ENCODE measurements at regions of chr7 and their contacts with region 1.

Region 1: DNA sequence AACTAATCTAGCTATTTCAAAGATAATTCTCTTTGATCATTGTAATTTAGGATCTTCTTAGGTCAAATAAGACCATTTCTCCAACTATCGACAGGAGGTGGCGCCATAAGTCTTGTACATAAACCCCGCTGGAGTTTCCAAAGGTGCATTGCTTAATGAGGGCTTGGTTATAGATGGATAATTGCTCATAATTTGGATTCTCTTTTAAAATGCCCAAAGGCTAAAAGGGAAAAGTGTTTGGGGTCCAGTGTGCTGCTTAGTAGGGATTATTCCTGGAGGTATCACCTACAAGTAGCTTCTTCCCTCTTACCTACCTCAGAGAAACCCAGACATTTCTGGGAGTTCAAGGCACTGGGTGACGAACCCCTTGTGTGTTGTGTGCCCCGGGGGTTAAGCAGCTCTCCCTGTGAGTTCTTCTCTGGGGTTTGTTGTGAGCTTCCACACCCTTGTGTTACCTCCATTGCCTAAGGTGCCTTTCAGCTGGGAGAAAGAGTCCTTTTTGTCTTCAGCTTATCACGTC is 75.2 kb downstream of the PAXIP1 start:
- DNase-seq: peak; percentile 85
- H3K4me3 ChIP-seq: peak overlapping the region; percentile 63
- H3K27ac ChIP-seq: no peak overlapping the region
- H3K4me1 ChIP-seq: no peaks in the 10 kb centered on the region
- H3K27me3 ChIP-seq: peaks cover 31% of the 10 kb centered on the region
- CTCF ChIP-seq: peak; percentile 77

Region 2: GRCh38 chr7:155009570-155010157 is 82.0 kb after region 1 on chr7:
- CTCF ChIA-PET with region 1: interaction called, 3 read pairs
- POLR2A ChIA-PET with region 1: no interaction called
- intact Hi-C with region 1: loop called (anchors 5 kb)
- DNase-seq: peak; percentile 25
- H3K4me3 ChIP-seq: no peak overlapping the region
- H3K27ac ChIP-seq: no peak overlapping the region
- H3K4me1 ChIP-seq: no peaks in the 10 kb centered on the region
- H3K27me3 ChIP-seq: no peaks in the 10 kb centered on the region
- CTCF ChIP-seq: peak; percentile 59

Region 3: DNA sequence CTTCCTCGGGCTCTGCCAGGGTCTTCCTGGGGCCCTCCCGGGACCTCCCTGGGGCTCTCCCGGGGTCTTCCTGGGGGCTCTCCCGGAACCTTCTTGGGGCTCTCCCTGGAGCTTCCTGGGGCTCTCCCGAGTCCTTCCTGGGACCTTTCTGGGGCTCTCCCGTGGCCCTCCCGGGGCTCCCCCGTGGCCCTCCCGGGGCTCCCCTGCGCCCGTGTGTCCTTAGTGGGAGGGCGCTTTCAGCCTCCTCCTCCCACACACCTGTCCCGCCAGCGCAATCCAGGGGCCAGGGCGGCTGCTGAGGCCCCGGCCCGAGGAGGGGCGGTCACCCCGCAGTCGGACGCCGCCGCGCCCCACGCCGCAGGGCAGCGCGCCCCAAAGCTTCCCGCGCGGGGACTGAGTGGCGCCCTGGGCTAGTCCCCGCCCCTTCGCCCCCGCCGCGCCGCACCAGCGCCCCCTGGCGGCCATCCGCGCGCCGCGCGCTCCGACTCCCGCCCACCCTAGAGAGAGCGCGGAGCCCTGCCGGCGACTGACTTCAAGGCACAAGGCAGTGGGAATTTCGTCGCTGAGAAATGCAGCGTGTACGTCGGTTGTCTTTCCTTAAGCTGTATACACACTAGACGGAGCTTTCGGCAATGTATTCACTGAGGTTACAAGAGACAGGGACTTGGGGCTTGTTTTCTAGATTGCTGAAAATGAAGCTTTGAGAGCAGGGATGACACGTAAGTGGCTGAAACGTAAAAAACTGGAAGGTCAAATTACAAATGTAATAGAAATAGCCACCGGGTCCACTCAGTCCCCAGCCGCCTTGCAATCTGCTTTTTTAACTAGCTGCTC is 417.1 kb after region 1 on chr7:
- CTCF ChIA-PET with region 1: interaction called, 9 read pairs
- POLR2A ChIA-PET with region 1: no interaction called
- intact Hi-C with region 1: loop called (anchors 1 kb)
- DNase-seq: peak; percentile 84
- H3K4me3 ChIP-seq: peak overlapping the region; percentile 45
- H3K27ac ChIP-seq: peak overlapping the region; percentile 44
- H3K4me1 ChIP-seq: peaks cover 5% of the 10 kb centered on the region
- H3K27me3 ChIP-seq: no peaks in the 10 kb centered on the region
- CTCF ChIP-seq: peak; percentile 73

Region 4: DNA sequence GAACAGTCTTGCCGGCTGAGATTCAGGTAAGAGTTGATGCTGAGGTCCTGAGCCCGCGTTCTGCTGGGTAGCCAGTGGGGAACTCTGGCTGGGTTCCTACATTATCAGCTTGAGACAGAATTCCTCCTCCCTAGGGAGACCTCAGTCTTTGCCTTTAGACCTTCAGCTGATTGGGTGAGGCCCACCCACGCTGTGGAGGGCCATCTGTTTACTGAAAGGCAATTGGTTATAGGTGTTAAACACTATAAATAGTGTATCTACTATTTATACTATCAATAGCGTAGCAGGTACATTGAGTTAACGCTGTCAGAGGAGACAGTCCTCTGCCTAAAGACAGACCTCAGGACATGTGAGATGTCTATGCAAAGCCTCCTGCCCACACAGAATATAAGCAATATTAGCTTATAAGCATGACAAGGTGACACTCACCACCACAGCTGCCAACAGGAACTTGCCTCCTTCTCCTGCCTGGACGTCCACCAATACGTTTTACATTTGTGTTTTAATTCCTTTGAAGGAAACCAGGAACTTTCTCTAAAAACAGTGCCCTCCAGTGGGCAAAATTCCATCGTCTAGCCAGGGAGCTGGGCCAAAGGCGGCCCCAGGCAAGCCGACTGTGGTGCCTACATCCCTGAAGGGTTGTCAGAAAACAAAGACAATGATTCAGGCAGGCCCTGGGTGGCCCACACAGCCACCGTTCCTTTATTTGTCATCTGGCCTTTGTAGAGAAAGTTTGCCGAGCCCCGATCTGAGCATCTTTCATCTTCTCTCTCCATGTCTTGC is 428.8 kb after region 1 on chr7:
- CTCF ChIA-PET with region 1: interaction called, 11 read pairs
- POLR2A ChIA-PET with region 1: no interaction called
- intact Hi-C with region 1: loop called (anchors 5 kb)
- DNase-seq: peak; percentile 61
- H3K4me3 ChIP-seq: no peak overlapping the region
- H3K27ac ChIP-seq: no peak overlapping the region
- H3K4me1 ChIP-seq: no peaks in the 10 kb centered on the region
- H3K27me3 ChIP-seq: peaks cover 51% of the 10 kb centered on the region
- CTCF ChIP-seq: peak; percentile 71

Region 5: DNA sequence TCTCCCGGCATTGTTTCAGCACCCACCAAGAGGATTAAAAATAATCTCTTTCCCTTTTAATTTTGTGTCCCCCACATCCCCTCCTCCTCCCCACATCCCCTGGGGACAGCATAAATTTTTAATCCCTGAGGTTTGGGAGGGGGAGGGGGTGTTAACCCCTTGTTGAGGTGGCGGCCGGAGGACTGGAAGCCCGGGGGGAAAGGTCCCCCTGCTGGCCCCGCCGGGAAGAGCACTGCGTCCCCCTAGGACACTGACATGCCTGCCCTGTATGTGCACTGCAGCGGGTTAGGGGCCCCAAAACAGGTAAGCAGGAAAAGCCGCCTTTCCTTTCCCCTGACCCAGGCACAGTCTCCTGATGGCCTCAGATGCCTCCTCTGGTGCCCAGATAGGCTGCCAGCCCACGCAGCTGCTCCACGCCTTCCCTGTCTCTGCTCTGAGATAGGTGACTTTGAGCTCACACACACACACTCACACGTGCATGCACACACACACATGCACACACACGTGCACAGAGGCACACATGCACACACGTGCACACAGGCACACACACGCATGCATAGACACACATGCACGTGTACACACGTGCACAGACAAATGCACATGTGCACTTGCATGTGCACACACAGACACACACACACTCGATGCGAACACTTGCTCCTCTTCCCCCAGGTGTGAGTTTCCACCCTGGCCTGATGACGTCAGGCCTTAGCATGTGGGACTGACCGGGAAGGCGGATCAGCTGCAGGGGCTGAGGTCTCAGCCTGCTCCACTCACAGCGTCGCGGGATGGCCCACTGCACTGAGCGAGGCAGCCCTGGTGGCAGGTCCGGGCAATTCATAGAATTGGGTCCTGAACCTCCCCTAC is 606.4 kb after region 1 on chr7:
- CTCF ChIA-PET with region 1: no interaction called
- POLR2A ChIA-PET with region 1: no interaction called
- intact Hi-C with region 1: loop called (anchors 10 kb)
- DNase-seq: peak; percentile 63
- H3K4me3 ChIP-seq: peak overlapping the region; percentile 32
- H3K27ac ChIP-seq: no peak overlapping the region
- H3K4me1 ChIP-seq: peaks cover 14% of the 10 kb centered on the region
- H3K27me3 ChIP-seq: peaks cover 66% of the 10 kb centered on the region
- CTCF ChIP-seq: peak; percentile 67

Region 6: DNA sequence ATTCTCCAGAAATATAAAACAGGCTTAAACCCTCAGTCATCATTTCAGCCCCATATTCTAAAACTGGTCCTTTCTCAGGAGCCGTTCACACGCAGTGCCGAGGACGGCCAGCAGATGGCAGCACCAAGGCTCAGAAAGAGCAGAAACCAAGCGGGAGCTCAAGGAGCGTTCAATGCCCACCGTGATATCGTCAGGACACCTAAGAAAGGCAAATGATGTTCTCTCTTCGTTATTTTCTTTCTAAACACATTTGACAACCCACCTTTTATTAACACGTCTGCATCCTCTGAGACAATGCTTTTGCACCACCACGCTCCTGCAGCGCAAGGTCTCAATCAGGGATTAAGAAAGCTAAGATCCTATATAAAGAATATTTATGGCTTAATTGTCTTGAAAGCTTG is 671.1 kb after region 1 on chr7:
- CTCF ChIA-PET with region 1: interaction called, 3 read pairs
- POLR2A ChIA-PET with region 1: no interaction called
- intact Hi-C with region 1: loop called (anchors 10 kb)
- DNase-seq: peak; percentile 84
- H3K4me3 ChIP-seq: no peak overlapping the region
- H3K27ac ChIP-seq: no peak overlapping the region
- H3K4me1 ChIP-seq: no peaks in the 10 kb centered on the region
- H3K27me3 ChIP-seq: peaks cover 20% of the 10 kb centered on the region
- CTCF ChIP-seq: peak; percentile 99